Activated CD8-positive, alpha-beta T cell treated with anti-CD3 and anti-CD28 coated beads, Interleukin-2, amount 10 ng/mL, durations not matched to agents 7 days and 5 days (primary cell): ENCODE measurements at regions of chr20 and their contacts with region 1.

Region 1: DNA sequence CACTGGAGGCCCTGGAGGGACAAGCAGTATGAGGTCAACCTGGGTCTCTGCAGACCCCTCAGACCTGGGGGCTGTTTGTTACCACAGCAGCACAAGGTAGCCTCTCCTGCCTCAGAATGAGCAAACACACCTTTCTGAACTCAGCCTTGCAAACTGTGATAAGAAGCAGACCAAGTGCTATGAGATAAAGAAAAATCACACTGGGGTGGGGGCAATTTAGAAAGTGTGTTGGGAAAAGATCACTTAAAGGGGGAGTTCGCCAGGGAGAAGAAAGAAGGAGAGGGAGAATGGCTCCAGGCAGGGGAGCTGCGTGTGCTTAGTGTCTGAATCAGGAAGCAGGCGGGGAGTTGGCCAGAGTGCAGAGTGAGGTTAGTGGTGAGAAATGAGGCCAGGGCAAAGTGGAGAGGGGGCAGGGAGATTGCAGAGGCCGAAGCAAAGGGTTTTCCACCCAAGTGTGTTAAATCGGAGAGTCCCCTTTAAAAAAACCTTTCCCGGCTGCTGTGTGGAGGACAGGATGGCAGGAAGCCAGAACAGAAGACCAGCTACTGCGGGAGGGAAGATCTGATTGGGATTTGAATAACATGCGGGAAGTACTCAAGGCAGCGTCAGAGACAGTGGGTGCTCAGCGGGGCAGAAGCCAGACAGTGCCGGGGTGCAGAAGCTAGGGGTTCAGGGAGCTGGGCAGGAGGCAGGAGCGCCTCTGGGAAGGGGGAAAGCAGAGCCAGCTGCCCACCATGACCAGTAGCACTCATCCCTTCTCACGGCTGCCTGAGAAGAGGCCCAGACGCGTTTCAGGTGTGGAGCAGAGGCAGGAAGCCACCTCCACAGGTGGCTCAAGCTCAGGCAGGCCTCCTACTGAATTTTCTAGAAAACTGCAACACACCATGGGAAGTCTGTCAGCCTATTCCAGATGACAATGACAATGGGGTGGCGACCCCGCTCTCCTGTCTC is 9.0 kb downstream of the ADA start:
- DNase-seq: peak; percentile 59
- ATAC-seq: peak; percentile 18
- H3K4me3 Mint-ChIP-seq: peak overlapping the region; percentile 57
- H3K27ac Mint-ChIP-seq: peak overlapping the region; percentile 99
- H3K4me1 Mint-ChIP-seq: peaks cover 77% of the 10 kb centered on the region
- H3K27me3 Mint-ChIP-seq: no peaks in the 10 kb centered on the region

Region 2: GRCh38 chr20:44664131-44664530 is 21.7 kb after region 1 on chr20:
- CTCF ChIA-PET with region 1: interaction called, 11 read pairs
- POLR2A ChIA-PET with region 1: no interaction called
- DNase-seq: no peak
- ATAC-seq: no peak
- H3K4me3 Mint-ChIP-seq: no peak overlapping the region
- H3K27ac Mint-ChIP-seq: no peak overlapping the region
- H3K4me1 Mint-ChIP-seq: peaks cover 26% of the 10 kb centered on the region
- H3K27me3 Mint-ChIP-seq: no peaks in the 10 kb centered on the region